ENCODE measurements at regions of chr2 and their contacts with region 1.

Region 1: GRCh38 chr2:61233581-61233980 is 71.6 kb downstream of the C2orf74 start:
- H3K4me3 ChIP-seq: no peak overlapping the region
- H3K27ac ChIP-seq: no peak overlapping the region
- H3K4me1 ChIP-seq: no peaks in the 10 kb centered on the region
- CTCF ChIP-seq: no peak

Region 2: DNA sequence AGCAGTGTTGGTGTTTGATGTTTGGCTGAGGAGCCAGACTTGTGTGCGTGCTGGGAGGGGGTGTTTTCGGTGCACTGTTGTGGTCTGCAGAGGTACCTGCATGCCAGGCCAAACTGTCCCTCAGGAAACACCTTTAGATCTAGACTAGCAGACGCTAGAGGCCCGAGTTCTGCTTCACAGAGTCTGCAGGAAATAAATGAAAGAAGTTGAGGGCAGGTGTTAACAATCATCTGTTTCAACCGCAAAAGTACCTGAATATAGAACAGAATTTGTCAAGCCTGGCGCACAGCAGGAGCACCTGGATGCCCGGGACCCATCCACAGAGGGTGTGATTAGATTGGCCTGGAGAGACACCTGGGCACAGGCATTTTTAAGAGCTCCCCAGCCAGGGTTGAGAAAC is 392.7 kb before region 1 on chr2:
- CTCF ChIA-PET with region 1: no interaction called
- POLR2A ChIA-PET with region 1: interaction called, 10 read pairs
- H3K4me3 ChIP-seq: no peak overlapping the region
- H3K27ac ChIP-seq: no peak overlapping the region
- H3K4me1 ChIP-seq: no peaks in the 10 kb centered on the region
- CTCF ChIP-seq: no peak

Measured in HEK293 (cell line).